HepG2 (cell line): ENCODE measurements at regions of chrX and their contacts with region 1.

Region 1: DNA sequence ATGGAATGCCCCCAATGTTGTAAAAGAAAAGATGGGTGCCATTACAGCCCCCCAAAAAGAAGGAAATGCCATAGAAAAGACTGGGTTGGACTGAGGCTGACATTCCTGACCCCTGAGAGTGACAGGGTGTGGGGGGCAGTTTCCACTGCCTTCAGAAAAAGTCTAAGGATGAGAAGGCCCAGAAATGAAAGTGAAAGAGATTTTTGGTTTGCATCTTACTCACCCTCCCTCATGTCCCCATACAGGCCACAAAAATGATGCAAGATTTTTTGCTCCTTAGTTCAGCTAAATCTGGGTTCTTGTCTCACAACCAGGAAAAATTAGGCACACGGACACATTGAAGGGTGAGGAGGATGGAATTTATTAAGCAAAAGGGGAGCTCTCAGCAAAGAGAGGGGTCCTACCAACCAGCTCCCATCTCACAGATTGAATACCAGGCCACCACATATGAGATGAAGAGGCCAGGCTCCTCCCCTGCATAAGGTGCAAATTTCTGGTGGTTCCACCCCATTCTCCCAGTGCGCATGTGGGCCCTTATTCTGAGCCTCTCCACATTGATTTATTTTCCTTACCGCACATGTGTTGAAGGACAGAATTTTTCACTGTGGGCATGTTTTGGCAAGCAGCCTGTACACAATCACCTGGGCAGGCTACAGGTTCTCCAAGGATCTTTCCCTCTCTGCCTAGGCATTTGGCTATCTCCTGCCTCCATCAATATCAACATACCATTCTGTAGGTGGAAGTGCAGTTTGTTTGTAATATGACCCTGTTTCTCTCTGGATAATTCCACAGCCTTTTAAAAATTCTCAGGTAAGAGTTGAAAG is 18.8 kb downstream of the PPP4R3C start:
- DNase-seq: peak; percentile 14
- ATAC-seq: peak; percentile 28; the same call in 2 of the 3 replicates
- H3K4me3 ChIP-seq: no peak overlapping the region
- H3K27ac ChIP-seq: peak overlapping the region; percentile 85
- H3K4me1 ChIP-seq: peaks cover 47% of the 10 kb centered on the region
- H3K27me3 ChIP-seq: no peaks in the 10 kb centered on the region
- CTCF ChIP-seq: no peak
- EP300 ChIP-seq: no peak
- POLR2A ChIP-seq: no peak
- RAD21 ChIP-seq: no peak

Region 2: DNA sequence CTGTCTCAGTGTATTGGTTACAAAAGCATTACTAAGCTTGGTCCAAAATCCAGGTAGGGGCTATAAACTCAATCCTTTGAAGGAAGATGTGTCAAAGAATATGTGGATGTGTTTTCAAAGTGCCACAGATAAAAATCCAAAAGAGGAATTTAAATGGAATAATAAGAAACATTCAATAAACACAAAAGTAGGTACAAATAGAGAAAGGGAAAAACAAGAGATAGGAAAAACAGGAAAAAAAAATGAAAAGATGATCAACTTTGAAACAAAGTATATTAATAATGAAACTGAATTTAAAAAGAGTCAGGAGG is 45.2 kb before region 1 on chrX:
- CTCF ChIA-PET with region 1: no interaction called
- POLR2A ChIA-PET with region 1: no interaction called
- in situ Hi-C with region 1: no loop called
- intact Hi-C with region 1: loop called (anchors 5 kb)
- DNase-seq: no peak
- ATAC-seq: no peak
- H3K4me3 ChIP-seq: no peak overlapping the region; a peak in 1 of 6 replicates
- H3K27ac ChIP-seq: no peak overlapping the region
- H3K4me1 ChIP-seq: no peaks in the 10 kb centered on the region
- H3K27me3 ChIP-seq: no peaks in the 10 kb centered on the region
- CTCF ChIP-seq: no peak
- EP300 ChIP-seq: no peak
- POLR2A ChIP-seq: no peak
- RAD21 ChIP-seq: no peak

Region 3: GRCh38 chrX:27549688-27550087 is 105.4 kb after region 1 on chrX:
- CTCF ChIA-PET with region 1: no interaction called
- POLR2A ChIA-PET with region 1: interaction called, 3 read pairs
- in situ Hi-C with region 1: no loop called
- intact Hi-C with region 1: loop called (anchors 10 kb)
- DNase-seq: no peak
- ATAC-seq: no peak
- H3K4me3 ChIP-seq: no peak overlapping the region
- H3K27ac ChIP-seq: no peak overlapping the region
- H3K4me1 ChIP-seq: peaks cover 7% of the 10 kb centered on the region; the same call in 1 of the 2 replicates
- H3K27me3 ChIP-seq: no peaks in the 10 kb centered on the region
- CTCF ChIP-seq: no peak
- EP300 ChIP-seq: no peak
- POLR2A ChIP-seq: no peak
- RAD21 ChIP-seq: no peak